ENCODE measurements at regions of chr18 and their contacts with region 1.

Region 1: GRCh38 chr18:61551586-61551985 is 218.4 kb downstream of the CDH20 start:
- DNase-seq: no peak
- ATAC-seq: peak; percentile 83
- H3K4me3 ChIP-seq: no peak overlapping the region
- H3K27ac ChIP-seq: no peak overlapping the region
- H3K4me1 ChIP-seq: no peaks in the 10 kb centered on the region
- H3K27me3 ChIP-seq: no peaks in the 10 kb centered on the region
- CTCF ChIP-seq: peak; percentile 88

Region 2: GRCh38 chr18:62131301-62131909 is 579.8 kb after region 1 on chr18:
- intact Hi-C with region 1: loop called (anchors 10 kb)
- DNase-seq: no peak
- ATAC-seq: peak; percentile 85
- H3K4me3 ChIP-seq: no peak overlapping the region
- H3K27ac ChIP-seq: no peak overlapping the region
- H3K4me1 ChIP-seq: no peaks in the 10 kb centered on the region
- H3K27me3 ChIP-seq: no peaks in the 10 kb centered on the region
- CTCF ChIP-seq: peak; percentile 92

Measured in upper lobe of right lung (tissue), 1 donor.